Left ventricle myocardium superior (tissue), 1 donor: ENCODE measurements at regions of chr1 and their contacts with region 1.

Region 1: DNA sequence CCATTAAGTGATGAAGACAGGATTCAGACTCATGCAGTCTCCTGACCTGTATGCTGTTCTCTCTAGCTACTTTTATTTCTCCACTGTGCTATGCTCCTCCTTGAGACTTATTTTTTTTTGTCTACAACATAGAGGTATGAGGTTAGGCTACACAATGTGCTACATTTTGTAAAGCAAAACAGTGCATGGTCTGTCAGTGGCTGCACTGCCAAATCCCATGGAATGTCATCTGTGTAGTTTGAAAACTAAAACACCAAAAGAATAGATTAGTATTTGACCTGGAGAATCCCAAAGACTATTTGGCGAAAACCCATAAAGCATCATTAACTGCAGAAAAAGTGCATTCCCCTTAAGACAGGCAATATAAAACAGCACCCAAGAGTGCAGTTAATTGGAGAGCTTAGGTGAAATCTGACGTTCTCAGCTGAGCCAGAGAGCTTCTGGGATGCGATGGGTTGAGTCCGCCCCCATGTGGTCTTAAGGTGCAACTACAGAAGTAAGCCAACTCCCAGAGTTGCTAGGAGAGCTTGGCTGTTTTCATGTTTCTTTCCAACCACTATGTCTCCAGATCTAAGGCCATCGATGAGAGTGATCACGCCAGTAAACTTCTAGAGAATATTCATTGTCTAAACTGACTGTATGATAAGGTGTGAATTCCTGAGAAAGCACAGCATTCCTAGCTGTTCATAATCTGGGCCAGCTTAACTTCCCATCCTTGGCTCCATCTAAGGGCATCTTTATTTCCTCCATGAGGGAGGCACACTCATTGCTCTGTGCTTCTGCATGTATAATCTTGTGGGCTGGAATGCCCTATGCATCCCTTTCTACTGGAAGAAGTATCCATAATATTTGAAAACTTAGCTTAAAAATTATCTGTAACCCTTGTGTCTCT is 20.7 kb upstream of the CYP2J2 start:
- DNase-seq: no peak
- ATAC-seq: peak; percentile 88

Region 2: GRCh38 chr1:59468828-59469428 is 478.4 kb before region 1 on chr1:
- intact Hi-C with region 1: no loop called
- DNase-seq: no peak
- ATAC-seq: no peak

Region 3: DNA sequence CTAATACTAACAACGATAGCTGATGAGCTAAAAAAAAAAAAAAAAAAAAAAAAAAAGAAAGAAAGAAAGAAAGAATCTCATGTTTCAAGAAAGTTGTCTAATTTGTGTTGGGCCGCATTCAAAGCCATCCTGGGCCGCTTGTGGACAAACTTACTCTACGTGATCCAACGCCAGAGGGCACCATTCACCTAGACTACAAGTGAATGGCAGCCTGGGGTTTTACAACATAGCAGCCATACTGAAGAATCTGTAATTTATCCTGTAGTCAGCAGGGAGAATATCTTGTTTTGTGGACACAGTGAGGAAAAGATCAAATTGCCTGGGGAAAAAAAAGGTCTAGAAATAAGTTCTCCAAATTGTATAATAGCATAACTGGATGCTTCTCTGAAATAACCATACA is 67.7 kb before region 1 on chr1:
- intact Hi-C with region 1: loop called (anchors 1 kb)
- DNase-seq: peak; percentile 65
- ATAC-seq: peak; percentile 93